Heart left ventricle (tissue), 16 donors: ENCODE measurements at regions of chr9 and their contacts with region 1.

Region 1: DNA sequence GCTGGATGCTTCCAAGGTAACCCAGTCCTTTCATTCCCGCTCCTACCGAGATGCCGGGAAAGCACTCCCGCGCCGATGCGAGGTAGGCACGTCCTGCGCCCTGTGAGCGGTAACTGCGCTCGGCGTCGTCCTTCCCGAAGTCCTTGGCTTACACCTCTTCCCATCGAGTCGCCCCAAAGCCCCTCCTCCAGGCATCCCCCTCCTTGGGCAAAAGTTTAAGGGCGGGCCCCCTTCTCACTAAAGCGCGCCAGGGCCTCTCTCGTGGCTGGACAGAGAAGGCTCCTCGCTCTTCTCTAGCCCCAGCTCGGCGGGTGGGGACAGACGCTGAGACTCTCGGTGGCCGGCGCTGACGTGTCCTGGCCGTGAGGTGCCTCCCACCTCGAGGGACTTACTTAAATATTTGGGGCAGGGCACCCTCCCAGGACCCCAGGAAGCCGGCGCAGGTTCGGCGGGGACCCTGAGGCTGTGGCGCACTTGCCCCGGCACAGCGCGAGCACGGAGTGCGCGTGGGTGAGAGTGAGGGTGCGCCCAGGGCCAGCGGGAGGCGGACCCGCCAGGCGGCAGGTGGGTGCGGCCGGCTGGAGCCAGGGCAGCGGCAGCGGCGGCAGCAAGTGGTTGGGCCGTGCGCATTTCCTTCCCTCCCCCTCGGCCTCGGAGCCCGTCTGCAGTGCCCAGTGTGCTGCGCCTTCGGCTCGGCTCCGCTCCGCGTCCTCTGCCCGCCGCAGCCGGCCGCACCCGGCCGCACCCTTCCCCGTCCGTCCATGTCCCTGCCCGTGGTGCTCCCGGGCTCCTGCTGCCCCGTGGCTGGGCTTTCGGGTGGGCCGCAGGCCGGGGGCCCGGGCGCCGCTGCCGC is at the start of gene ENTREP1:
- DNase-seq: peak; percentile 75 to 86 (median 77)
- ATAC-seq: peak; percentile 71 to 97 (median 93)
- H3K4me3 ChIP-seq: peak within 1 kb of the TSS; percentile 51 to 87 (median 67)
- H3K27ac ChIP-seq: peak within 1 kb of the TSS; percentile 63 to 93 (median 88)
- H3K4me1 ChIP-seq: peaks cover 0 to 34% (median 4%) of the 10 kb centered on the region in 12 donors
- H3K27me3 ChIP-seq: peaks cover 0 to 23% (median 0%) of the 10 kb centered on the region in 9 donors
- CTCF ChIP-seq: peak in 7 of 12 donors; percentile 13 to 44 (median 35)
- POLR2A ChIP-seq: peak in 1 of 2 donors; percentile 41
- total RNA-seq, gene ENTREP1: 16.6 to 29.1 (median 24.8) TPM

Region 2: GRCh38 chr9:69157751-69158466 is 166.9 kb before region 1 on chr9:
- intact Hi-C with region 1: no loop called
- DNase-seq: peak in 1 of 5 donors; percentile 3
- ATAC-seq: no peak
- H3K4me3 ChIP-seq: no peak overlapping the region
- H3K27ac ChIP-seq: no peak overlapping the region
- H3K4me1 ChIP-seq: peaks cover 0 to 11% (median 0%) of the 10 kb centered on the region in 12 donors
- H3K27me3 ChIP-seq: no peaks in the 10 kb centered on the region
- CTCF ChIP-seq: peak in 8 of 12 donors; percentile 13 to 35 (median 24)
- POLR2A ChIP-seq: no peak

Region 3: DNA sequence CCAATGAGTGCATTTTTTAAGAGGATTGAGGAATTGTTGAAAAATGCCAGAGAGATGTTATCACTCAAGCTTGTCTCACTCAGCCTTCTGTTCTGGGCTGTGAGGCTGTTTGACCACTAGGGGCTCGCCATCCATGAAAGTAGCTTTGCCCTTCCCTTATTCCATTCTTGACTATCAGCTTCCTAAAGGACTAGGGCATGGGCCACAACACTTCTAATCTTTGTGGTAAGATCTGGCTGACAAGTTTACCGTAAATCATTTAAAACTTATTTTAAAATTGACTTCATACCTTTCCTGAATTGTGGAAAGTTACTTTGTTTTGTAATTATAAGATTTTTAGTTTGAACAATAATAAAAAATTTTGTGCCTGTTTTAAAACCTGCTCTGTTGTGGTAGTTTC is 101.2 kb before region 1 on chr9:
- intact Hi-C with region 1: loop called in 1 of 10 experiments (anchors 5 kb)
- DNase-seq: peak in 3 of 5 donors; percentile 30 to 45 (median 41)
- ATAC-seq: peak; percentile 62 to 89 (median 84)
- H3K4me3 ChIP-seq: peak overlapping the region in 1 of 12 donors; percentile 7
- H3K27ac ChIP-seq: peak overlapping the region in 5 of 12 donors; percentile 15 to 43 (median 33)
- H3K4me1 ChIP-seq: peaks cover 0 to 15% (median 3%) of the 10 kb centered on the region in 12 donors
- H3K27me3 ChIP-seq: no peaks in the 10 kb centered on the region
- CTCF ChIP-seq: peak; percentile 48 to 73 (median 60)
- POLR2A ChIP-seq: no peak

Region 4: DNA sequence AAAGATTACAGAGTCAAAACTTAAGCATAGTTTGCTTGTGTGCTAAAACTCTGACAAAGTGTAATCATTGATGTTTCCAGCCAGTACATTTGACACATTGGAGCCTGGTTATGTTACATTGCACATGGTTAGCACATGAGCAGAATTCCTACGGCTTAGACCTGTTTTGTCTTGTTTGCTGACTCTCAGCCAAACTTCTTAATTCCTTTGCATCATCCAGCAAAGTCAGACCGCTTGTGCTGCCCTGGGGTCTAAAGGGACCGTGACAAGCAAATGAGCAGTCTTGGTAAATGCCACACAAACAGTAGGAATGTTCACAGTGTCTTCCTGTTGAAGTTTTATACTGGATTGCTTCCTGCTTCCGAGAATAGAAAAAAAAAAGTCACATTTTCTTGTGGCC is 71.7 kb before region 1 on chr9:
- intact Hi-C with region 1: loop called in 2 of 10 experiments (anchors 10 kb)
- DNase-seq: no peak
- ATAC-seq: peak in 3 of 4 donors; percentile 18 to 32 (median 30)
- H3K4me3 ChIP-seq: no peak overlapping the region
- H3K27ac ChIP-seq: peak overlapping the region in 9 of 12 donors; percentile 3 to 59 (median 47)
- H3K4me1 ChIP-seq: peaks cover 0 to 18% (median 6%) of the 10 kb centered on the region in 12 donors
- H3K27me3 ChIP-seq: no peaks in the 10 kb centered on the region
- CTCF ChIP-seq: no peak
- POLR2A ChIP-seq: no peak

Region 5: GRCh38 chr9:69273161-69273560 is 51.6 kb before region 1 on chr9:
- intact Hi-C with region 1: loop called in 1 of 10 experiments (anchors 5 kb)
- DNase-seq: peak in 3 of 5 donors; percentile 36 to 42 (median 37)
- ATAC-seq: peak; percentile 91 to 98 (median 98)
- H3K4me3 ChIP-seq: no peak overlapping the region
- H3K27ac ChIP-seq: peak overlapping the region; percentile 61 to 94 (median 80)
- H3K4me1 ChIP-seq: peaks cover 0 to 17% (median 6%) of the 10 kb centered on the region in 12 donors
- H3K27me3 ChIP-seq: no peaks in the 10 kb centered on the region
- CTCF ChIP-seq: no peak
- POLR2A ChIP-seq: no peak

Region 6: GRCh38 chr9:69376651-69377050 is 51.9 kb after region 1 on chr9:
- intact Hi-C with region 1: loop called in 5 of 10 experiments (anchors 5 to 10 kb)
- DNase-seq: peak in 4 of 5 donors; percentile 44 to 71 (median 52)
- ATAC-seq: peak; percentile 81 to 91 (median 84)
- H3K4me3 ChIP-seq: no peak overlapping the region
- H3K27ac ChIP-seq: peak overlapping the region in 11 of 12 donors; percentile 19 to 88 (median 46)
- H3K4me1 ChIP-seq: peaks cover 0 to 63% (median 37%) of the 10 kb centered on the region in 12 donors
- H3K27me3 ChIP-seq: no peaks in the 10 kb centered on the region
- CTCF ChIP-seq: no peak
- POLR2A ChIP-seq: no peak

Region 7: DNA sequence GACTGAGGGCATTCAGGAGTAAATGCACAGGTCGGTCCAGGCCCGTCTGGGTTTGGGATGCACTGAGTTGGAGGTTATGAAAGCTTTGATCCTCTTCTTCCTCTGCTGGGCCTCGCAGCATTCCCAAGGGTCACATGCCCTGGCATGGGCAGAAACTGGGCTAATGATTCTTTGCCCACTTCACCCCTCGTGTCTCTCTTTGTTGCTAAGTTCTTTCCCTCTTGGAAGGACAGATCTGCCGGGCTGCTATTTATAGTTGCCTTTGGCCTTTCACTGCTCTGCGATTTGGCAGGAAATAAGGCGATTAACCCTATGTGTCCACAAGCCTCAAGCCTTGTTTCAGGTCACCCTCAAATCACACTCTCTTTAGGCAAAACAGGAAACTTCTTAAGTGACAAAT is 67.2 kb after region 1 on chr9:
- intact Hi-C with region 1: loop called in 3 of 10 experiments (anchors 5 to 10 kb)
- DNase-seq: peak in 4 of 5 donors; percentile 63 to 74 (median 72)
- ATAC-seq: peak; percentile 79 to 91 (median 80)
- H3K4me3 ChIP-seq: no peak overlapping the region
- H3K27ac ChIP-seq: peak overlapping the region; percentile 58 to 88 (median 79)
- H3K4me1 ChIP-seq: peaks cover 0 to 45% (median 22%) of the 10 kb centered on the region in 12 donors
- H3K27me3 ChIP-seq: no peaks in the 10 kb centered on the region
- CTCF ChIP-seq: no peak
- POLR2A ChIP-seq: no peak